MCF 10A (cell line): ENCODE measurements at regions of chr1 and their contacts with region 1.

Region 1: GRCh38 chr1:238960071-238960470 is 426.3 kb upstream of the CHRM3 start:
- DNase-seq: peak; percentile 100
- H3K4me3 Mint-ChIP-seq: peak overlapping the region; percentile 34
- H3K27ac Mint-ChIP-seq: peak overlapping the region; percentile 17
- H3K4me1 Mint-ChIP-seq: peaks cover 38% of the 10 kb centered on the region
- H3K27me3 Mint-ChIP-seq: no peaks in the 10 kb centered on the region
- CTCF ChIP-seq: no peak

Region 2: DNA sequence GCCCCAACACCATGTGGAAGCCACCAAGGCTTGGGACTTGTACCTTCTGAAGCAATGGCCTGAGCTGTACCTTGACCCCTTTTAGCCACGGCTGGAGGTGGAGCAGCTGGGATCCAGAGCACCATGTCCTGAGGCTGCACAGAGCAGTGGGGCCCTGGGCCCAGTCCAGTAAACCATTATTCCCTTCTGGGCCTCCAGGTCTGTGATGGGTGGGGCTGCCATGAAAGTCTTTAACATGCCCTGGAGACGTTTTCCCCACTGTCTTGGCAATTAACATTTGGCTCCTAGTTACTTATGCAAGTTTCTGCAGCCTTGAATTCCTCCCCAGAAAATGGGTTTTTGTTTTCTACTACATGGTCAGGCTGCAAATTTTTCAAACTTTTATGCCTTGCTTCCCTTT is 745.6 kb before region 1 on chr1:
- CTCF ChIA-PET with region 1: no interaction called
- POLR2A ChIA-PET with region 1: no interaction called
- intact Hi-C with region 1: no loop called
- DNase-seq: no peak
- H3K4me3 Mint-ChIP-seq: no peak overlapping the region
- H3K27ac Mint-ChIP-seq: no peak overlapping the region
- H3K4me1 Mint-ChIP-seq: no peaks in the 10 kb centered on the region
- H3K27me3 Mint-ChIP-seq: no peaks in the 10 kb centered on the region
- CTCF ChIP-seq: no peak

Region 3: DNA sequence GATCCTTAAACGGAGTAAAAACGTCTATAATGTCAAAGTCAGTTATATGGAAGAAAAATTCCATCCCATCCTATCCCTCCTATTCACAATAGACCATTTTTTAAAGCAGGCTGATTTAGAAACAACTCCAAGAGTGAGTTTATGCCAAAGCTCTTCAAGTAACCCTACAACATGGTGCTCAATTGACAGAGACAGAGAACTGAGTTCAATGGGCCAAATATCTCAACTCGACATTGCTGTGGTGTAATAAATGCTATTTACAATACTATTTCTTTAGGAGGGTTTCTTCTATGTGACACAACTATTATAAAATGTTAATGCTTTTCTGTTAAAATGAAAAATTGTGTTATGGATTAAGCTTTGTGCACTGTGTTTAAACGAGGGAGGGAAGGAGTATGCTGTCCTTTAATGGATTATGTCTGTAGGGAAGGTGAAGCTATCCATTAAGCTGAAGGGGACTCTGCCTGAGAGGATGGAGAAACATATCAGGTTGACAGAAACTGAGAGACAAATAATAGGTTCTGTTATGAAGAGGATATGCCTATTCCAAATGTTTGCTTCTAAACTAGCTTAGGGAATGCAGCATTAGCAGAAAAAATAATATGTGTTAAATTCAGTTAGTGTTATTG is 63.8 kb after region 1 on chr1:
- CTCF ChIA-PET with region 1: no interaction called
- POLR2A ChIA-PET with region 1: no interaction called
- intact Hi-C with region 1: no loop called
- DNase-seq: no peak
- H3K4me3 Mint-ChIP-seq: no peak overlapping the region
- H3K27ac Mint-ChIP-seq: no peak overlapping the region
- H3K4me1 Mint-ChIP-seq: no peaks in the 10 kb centered on the region
- H3K27me3 Mint-ChIP-seq: no peaks in the 10 kb centered on the region
- CTCF ChIP-seq: no peak

Region 4: DNA sequence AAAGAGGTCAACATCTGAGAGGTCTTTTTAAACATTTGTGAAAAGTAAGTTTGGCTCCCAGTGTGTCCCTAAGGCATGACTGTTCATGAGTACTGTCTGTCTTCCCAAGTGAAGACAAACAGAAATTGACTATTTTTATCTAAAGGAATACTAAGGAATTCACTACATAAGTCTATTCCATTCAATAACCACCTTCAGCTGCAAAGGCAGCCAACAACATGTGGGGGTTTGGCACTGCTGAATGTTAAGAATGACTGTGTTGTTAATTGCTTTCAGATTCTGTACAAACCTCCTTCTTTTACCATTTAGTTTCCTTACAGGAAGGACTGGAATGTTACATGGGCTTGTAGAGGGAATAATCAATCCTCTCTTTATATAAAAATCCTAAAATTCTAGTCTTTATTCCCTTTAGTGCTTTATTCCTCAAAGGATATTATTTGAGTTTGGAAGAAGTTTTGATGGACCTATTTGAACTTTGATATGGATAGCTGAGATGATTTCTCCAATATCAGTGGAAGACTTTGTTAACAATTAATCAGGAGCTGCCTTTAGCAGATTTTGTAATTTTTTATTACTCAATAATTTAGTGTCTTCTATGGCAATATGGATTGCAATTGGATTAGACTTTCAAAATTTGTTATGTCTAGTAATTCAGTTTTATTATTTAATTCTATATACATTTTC is 224.6 kb after region 1 on chr1:
- CTCF ChIA-PET with region 1: no interaction called
- POLR2A ChIA-PET with region 1: no interaction called
- intact Hi-C with region 1: no loop called
- DNase-seq: no peak
- H3K4me3 Mint-ChIP-seq: no peak overlapping the region
- H3K27ac Mint-ChIP-seq: no peak overlapping the region
- H3K4me1 Mint-ChIP-seq: no peaks in the 10 kb centered on the region
- H3K27me3 Mint-ChIP-seq: no peaks in the 10 kb centered on the region
- CTCF ChIP-seq: no peak

Region 5: DNA sequence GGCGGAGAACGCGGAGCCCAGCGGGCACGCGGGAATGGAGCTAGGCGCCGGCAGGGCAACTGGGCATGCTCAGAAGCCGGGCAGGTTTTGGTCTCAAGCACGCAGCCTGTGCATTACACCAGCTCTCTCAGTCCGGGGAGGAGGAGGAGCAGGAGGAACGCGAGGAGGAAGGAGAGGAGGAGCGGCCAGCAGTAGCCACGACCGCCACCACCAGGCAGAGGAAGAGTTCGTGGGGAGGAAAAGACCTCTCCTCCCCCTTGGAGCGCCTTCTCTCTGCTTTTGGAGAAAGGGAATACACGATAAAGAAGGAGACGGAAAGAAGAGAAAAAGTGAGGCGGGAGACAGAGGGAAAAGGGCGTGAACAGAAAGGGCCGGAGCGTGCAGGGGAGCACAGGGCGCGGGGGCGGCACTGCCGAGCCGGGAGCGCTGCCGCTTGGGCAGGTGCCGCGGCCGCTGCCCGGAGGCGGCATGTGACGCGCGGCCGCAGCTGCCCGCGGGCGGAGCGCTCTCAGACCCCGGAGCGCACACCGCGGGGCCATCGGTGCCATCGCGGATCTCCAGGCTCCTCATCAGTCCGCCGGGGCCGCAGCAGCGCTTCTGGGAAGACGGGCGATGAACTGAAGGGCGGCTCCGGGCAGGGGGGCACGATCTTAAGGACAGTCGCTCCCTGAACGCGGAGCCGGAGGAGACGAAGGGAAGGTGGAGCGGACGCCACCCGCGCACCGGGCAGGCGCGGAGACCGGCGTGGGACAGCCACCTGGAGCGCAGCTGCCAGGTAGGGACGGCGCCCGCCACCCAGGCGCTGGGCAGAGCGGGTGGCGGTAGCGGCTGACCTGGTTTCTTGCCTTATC is 426.6 kb after region 1 on chr1 and contains the start of gene CHRM3:
- CTCF ChIA-PET with region 1: interaction called, 6 read pairs
- POLR2A ChIA-PET with region 1: no interaction called
- intact Hi-C with region 1: loop called (anchors 2 kb)
- DNase-seq: peak; percentile 96
- H3K4me3 Mint-ChIP-seq: peak within 1 kb of the TSS; percentile 89
- H3K27ac Mint-ChIP-seq: peak within 1 kb of the TSS; percentile 1
- H3K4me1 Mint-ChIP-seq: peaks cover 26% of the 10 kb centered on the region
- H3K27me3 Mint-ChIP-seq: peaks cover 55% of the 10 kb centered on the region
- CTCF ChIP-seq: peak; percentile 28
- total RNA-seq, gene CHRM3: 0.56 and 0.71 TPM in 2 replicates

Region 6: DNA sequence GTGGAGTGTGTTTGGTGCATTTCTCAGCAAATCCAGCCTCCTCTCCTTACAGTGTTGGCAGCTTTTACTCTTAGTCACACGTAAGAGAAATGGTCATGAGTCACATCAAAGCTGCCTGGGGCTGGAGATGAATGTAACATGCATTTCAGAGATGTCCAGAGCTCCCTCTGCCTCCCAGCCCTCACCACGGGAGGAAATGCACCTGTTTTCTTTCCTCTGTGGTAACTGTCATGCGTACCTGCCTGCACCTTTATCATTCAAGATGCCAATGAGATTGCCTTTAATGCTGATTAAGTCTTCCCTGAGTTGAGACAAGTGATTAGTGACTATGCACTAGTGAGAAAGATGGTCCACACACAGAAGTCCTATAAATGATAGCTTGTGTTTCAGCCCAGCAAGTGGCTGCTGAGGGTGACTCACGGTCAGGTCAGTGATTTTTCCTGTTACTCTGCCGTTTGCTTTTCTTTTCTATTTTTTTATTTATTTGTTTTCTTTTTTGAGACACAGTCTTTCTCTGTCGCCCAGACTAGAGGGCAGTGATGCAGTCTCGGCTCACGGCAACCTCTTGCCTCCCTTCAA is 854.3 kb after region 1 on chr1:
- CTCF ChIA-PET with region 1: no interaction called
- POLR2A ChIA-PET with region 1: no interaction called
- intact Hi-C with region 1: loop called (anchors 5 kb)
- DNase-seq: peak; percentile 100
- H3K4me3 Mint-ChIP-seq: peak overlapping the region; percentile 38
- H3K27ac Mint-ChIP-seq: peak overlapping the region; percentile 8
- H3K4me1 Mint-ChIP-seq: peaks cover 36% of the 10 kb centered on the region
- H3K27me3 Mint-ChIP-seq: no peaks in the 10 kb centered on the region
- CTCF ChIP-seq: peak; percentile 4

Region 7: DNA sequence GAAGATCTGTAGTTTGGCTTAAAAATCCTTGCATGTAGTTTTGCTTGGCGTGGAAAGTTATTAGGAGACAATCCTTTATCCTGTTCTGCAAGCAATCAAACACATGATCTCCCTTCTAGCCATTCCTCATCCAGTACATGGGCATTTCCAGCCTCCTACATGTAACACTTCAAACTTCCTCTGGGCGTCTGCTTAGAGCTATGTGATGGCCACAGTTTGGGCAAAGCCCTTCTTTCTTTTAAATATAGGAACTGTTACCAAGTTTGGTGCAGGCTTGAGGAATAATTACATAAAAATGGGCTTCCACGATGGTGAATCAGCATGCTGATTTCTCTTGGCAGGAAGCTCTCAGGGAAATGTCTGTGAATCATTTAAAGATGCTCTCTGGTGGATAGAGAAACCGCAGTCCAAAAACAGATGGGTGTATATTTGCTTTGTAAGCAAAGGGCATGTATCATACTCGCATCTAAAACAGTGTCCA is 954.7 kb after region 1 on chr1:
- CTCF ChIA-PET with region 1: no interaction called
- POLR2A ChIA-PET with region 1: no interaction called
- intact Hi-C with region 1: loop called (anchors 5 kb)
- DNase-seq: peak; percentile 94
- H3K4me3 Mint-ChIP-seq: no peak overlapping the region
- H3K27ac Mint-ChIP-seq: peak overlapping the region; percentile 59
- H3K4me1 Mint-ChIP-seq: peaks cover 40% of the 10 kb centered on the region
- H3K27me3 Mint-ChIP-seq: no peaks in the 10 kb centered on the region
- CTCF ChIP-seq: peak; percentile 18